Naive thymus-derived CD4-positive, alpha-beta T cell (primary cell): ENCODE measurements at regions of chr2 and their contacts with region 1.

Region 1: GRCh38 chr2:65432227-65433190 is at the start of gene SPRED2:
- DNase-seq: peak; percentile 36 to 75 (median 51)
- ATAC-seq: peak; percentile 58
- H3K4me3 ChIP-seq: peak within 1 kb of the TSS; percentile 75
- H3K4me3 Mint-ChIP-seq: peak within 1 kb of the TSS; percentile 89 to 95 (median 90)
- H3K27ac ChIP-seq: peak within 1 kb of the TSS; percentile 8
- H3K27ac Mint-ChIP-seq: peak within 1 kb of the TSS in 5 of 9 donors; percentile 31 to 90 (median 69)
- H3K4me1 ChIP-seq: peaks cover 8 to 11% of the 10 kb centered on the region in 2 donors
- H3K4me1 Mint-ChIP-seq: peaks cover 7 to 33% (median 16%) of the 10 kb centered on the region in 7 donors
- H3K27me3 ChIP-seq: peaks cover 0 to 22% of the 10 kb centered on the region in 2 donors
- H3K27me3 Mint-ChIP-seq: peaks cover 27 to 67% (median 36%) of the 10 kb centered on the region in 5 donors
- total RNA-seq, gene SPRED2: 0.34 to 7.9 (median 1.7) TPM

Region 2: GRCh38 chr2:64018923-64019718 is 1413.4 kb before region 1 on chr2 and contains the start of gene VPS54:
- CTCF ChIA-PET with region 1: no interaction called
- POLR2A ChIA-PET with region 1: no interaction called
- intact Hi-C with region 1: loop called in 1 of 2 experiments (anchors 10 kb)
- DNase-seq: peak; percentile 42 to 76 (median 65)
- ATAC-seq: peak; percentile 87
- H3K4me3 ChIP-seq: peak within 1 kb of the TSS; percentile 86
- H3K4me3 Mint-ChIP-seq: peak within 1 kb of the TSS; percentile 94 to 100 (median 98)
- H3K27ac ChIP-seq: peak within 1 kb of the TSS; percentile 79
- H3K27ac Mint-ChIP-seq: peak within 1 kb of the TSS; percentile 95 to 100 (median 97)
- H3K4me1 ChIP-seq: peaks cover 22 to 31% of the 10 kb centered on the region in 2 donors
- H3K4me1 Mint-ChIP-seq: peaks cover 20 to 60% (median 48%) of the 10 kb centered on the region in 7 donors
- H3K27me3 ChIP-seq: no peaks in the 10 kb centered on the region
- H3K27me3 Mint-ChIP-seq: no peaks in the 10 kb centered on the region
- total RNA-seq, gene VPS54: 13.2 to 20.8 (median 15.6) TPM

Region 3: DNA sequence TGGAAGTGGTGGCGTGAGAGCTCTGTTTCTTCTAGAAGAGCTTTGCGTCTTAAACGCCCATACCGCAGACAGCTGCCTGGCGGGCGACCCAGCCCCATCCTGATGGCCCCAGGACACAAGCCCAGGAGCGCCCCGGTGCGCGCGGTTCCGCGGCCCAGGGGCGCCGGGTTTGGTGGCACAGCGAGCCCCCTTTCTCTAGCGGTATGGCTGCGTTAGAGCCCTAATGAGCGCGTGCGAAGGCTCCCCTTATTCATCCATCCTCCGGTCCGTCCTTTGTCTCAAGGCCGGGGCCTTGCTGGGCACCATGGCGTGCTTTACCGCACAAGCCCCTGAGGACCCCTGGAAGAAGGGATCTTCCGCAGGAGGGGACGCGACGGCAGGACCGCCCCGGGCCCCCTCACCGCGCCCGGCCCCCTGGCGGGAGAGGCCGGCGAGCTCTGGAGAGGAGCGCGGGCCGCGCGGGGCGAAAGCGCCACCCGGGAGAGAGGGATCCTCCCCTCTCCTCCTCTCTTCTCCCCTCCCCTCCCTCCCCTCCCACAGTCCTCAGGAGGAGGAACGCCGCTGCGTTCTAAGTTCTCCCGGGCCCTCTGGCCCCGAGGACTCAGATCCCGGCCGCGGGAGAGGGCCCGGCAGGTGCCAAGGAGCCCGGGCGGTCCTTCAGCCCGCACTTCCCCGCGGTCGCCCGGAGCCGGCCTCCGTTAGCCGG is 443.9 kb before region 1 on chr2:
- CTCF ChIA-PET with region 1: no interaction called
- POLR2A ChIA-PET with region 1: no interaction called
- intact Hi-C with region 1: loop called (anchors 5 to 10 kb)
- DNase-seq: peak; percentile 17 to 70 (median 39)
- ATAC-seq: peak; percentile 47
- H3K4me3 ChIP-seq: peak overlapping the region; percentile 76
- H3K4me3 Mint-ChIP-seq: peak overlapping the region; percentile 80 to 92 (median 86)
- H3K27ac ChIP-seq: no peak overlapping the region
- H3K27ac Mint-ChIP-seq: peak overlapping the region in 4 of 9 donors; percentile 40 to 73 (median 44)
- H3K4me1 ChIP-seq: peaks cover 0 to 8% of the 10 kb centered on the region in 2 donors
- H3K4me1 Mint-ChIP-seq: peaks cover 16 to 62% (median 24%) of the 10 kb centered on the region in 7 donors
- H3K27me3 ChIP-seq: no peaks in the 10 kb centered on the region
- H3K27me3 Mint-ChIP-seq: peaks cover 0 to 33% (median 4%) of the 10 kb centered on the region in 5 donors

Region 4: GRCh38 chr2:65129826-65130663 is 302.5 kb before region 1 on chr2 and contains the start of gene RAB1A:
- CTCF ChIA-PET with region 1: no interaction called
- POLR2A ChIA-PET with region 1: no interaction called
- intact Hi-C with region 1: loop called in 1 of 2 experiments (anchors 1 kb)
- DNase-seq: peak; percentile 91 to 99 (median 98)
- ATAC-seq: peak; percentile 94
- H3K4me3 ChIP-seq: peak within 1 kb of the TSS; percentile 78
- H3K4me3 Mint-ChIP-seq: peak within 1 kb of the TSS; percentile 90 to 100 (median 98)
- H3K27ac ChIP-seq: peak within 1 kb of the TSS; percentile 98
- H3K27ac Mint-ChIP-seq: peak within 1 kb of the TSS; percentile 95 to 100 (median 99)
- H3K4me1 ChIP-seq: peaks cover 24 to 25% of the 10 kb centered on the region in 2 donors
- H3K4me1 Mint-ChIP-seq: peaks cover 24 to 47% (median 35%) of the 10 kb centered on the region in 7 donors
- H3K27me3 ChIP-seq: no peaks in the 10 kb centered on the region
- H3K27me3 Mint-ChIP-seq: peaks cover 0 to 17% (median 0%) of the 10 kb centered on the region in 5 donors
- total RNA-seq, gene RAB1A: 48.8 to 78.6 (median 65.8) TPM

Region 5: GRCh38 chr2:65264821-65265670 is 167.5 kb before region 1 on chr2:
- CTCF ChIA-PET with region 1: no interaction called
- POLR2A ChIA-PET with region 1: no interaction called
- intact Hi-C with region 1: loop called (anchors 2 to 10 kb)
- DNase-seq: peak in 6 of 9 donors; percentile 23 to 39 (median 34)
- ATAC-seq: no peak
- H3K4me3 ChIP-seq: no peak overlapping the region
- H3K4me3 Mint-ChIP-seq: no peak overlapping the region
- H3K27ac ChIP-seq: no peak overlapping the region
- H3K27ac Mint-ChIP-seq: peak overlapping the region in 5 of 9 donors; percentile 13 to 71 (median 57)
- H3K4me1 ChIP-seq: no peaks in the 10 kb centered on the region
- H3K4me1 Mint-ChIP-seq: peaks cover 8 to 28% (median 10%) of the 10 kb centered on the region in 7 donors
- H3K27me3 ChIP-seq: no peaks in the 10 kb centered on the region
- H3K27me3 Mint-ChIP-seq: no peaks in the 10 kb centered on the region

Region 6: GRCh38 chr2:65382776-65383357 is 49.6 kb before region 1 on chr2:
- CTCF ChIA-PET with region 1: no interaction called
- POLR2A ChIA-PET with region 1: no interaction called
- intact Hi-C with region 1: loop called (anchors 1 to 2 kb)
- DNase-seq: peak; percentile 31 to 84 (median 67)
- ATAC-seq: peak; percentile 87
- H3K4me3 ChIP-seq: peak overlapping the region; percentile 11
- H3K4me3 Mint-ChIP-seq: peak overlapping the region; percentile 50 to 83 (median 78)
- H3K27ac ChIP-seq: peak overlapping the region; percentile 41
- H3K27ac Mint-ChIP-seq: peak overlapping the region; percentile 26 to 91 (median 57)
- H3K4me1 ChIP-seq: peaks cover 0 to 23% of the 10 kb centered on the region in 2 donors
- H3K4me1 Mint-ChIP-seq: peaks cover 18 to 41% (median 26%) of the 10 kb centered on the region in 7 donors
- H3K27me3 ChIP-seq: no peaks in the 10 kb centered on the region
- H3K27me3 Mint-ChIP-seq: no peaks in the 10 kb centered on the region

Region 7: GRCh38 chr2:67397143-67397986 is 1964.9 kb after region 1 on chr2 and contains the start of gene ETAA1:
- CTCF ChIA-PET with region 1: no interaction called
- POLR2A ChIA-PET with region 1: no interaction called
- intact Hi-C with region 1: loop called in 1 of 2 experiments (anchors 10 kb)
- DNase-seq: peak; percentile 90 to 94 (median 92)
- ATAC-seq: peak; percentile 99
- H3K4me3 ChIP-seq: peak within 1 kb of the TSS; percentile 98
- H3K4me3 Mint-ChIP-seq: peak within 1 kb of the TSS; percentile 92 to 99 (median 97)
- H3K27ac ChIP-seq: peak within 1 kb of the TSS; percentile 87
- H3K27ac Mint-ChIP-seq: peak within 1 kb of the TSS; percentile 97 to 99 (median 98)
- H3K4me1 ChIP-seq: no peaks in the 10 kb centered on the region
- H3K4me1 Mint-ChIP-seq: peaks cover 9 to 26% (median 18%) of the 10 kb centered on the region in 7 donors
- H3K27me3 ChIP-seq: no peaks in the 10 kb centered on the region
- H3K27me3 Mint-ChIP-seq: no peaks in the 10 kb centered on the region
- total RNA-seq, gene ETAA1: 6.6 to 16.4 (median 10.0) TPM